ENCODE measurements at regions of chr5 and their contacts with region 1.

Region 1: DNA sequence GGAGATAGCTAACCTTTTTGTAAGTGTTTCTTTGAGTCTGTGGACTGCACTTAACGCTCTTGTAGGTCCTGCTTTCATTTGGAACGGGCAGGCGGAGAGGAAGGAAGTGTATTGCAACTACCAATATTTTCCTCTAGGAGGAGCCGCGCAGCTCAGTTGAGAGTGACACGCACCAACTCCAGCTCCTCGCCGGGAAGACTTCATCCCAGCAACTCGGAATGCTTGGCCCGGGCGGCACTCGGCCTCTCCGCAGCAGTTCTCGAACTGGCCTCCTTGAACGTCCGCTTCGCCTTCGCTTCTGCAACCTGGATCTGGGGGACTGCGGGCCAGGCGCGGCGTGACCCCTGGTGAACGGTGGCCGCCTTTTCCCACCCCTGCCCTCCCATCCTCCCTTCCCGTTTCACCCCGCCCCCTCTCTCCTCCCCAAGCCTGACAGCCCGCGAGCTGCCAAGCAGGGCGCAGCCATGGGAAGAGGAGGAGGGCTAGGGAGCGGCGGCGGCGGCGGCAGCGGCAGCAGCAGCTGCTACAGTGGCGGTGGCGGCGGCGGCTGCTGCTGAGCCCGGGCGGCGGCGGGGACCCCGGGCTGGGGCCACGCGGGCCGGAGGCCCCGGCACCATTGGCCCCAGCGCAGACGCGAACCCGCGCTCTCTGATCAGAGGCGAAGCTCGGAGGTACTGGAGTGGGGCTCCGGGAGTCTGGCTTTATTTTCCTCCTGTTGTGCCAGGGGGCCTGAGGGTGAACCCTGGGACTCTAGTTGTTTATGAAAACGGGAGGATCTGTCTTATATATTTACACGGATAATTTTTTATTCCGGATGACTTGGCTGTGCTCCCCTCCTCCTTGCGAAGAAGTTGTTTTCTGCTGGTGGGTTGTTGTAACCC is at the start of gene GHR:
- DNase-seq: peak; percentile 84 to 88 (median 87)
- ATAC-seq: peak; percentile 89 to 95 (median 94)
- H3K4me3 ChIP-seq: peak within 1 kb of the TSS; percentile 52 to 85 (median 70)
- H3K27ac ChIP-seq: peak within 1 kb of the TSS; percentile 54 to 94 (median 84)
- H3K4me1 ChIP-seq: peaks cover 0 to 31% (median 16%) of the 10 kb centered on the region in 12 donors
- H3K27me3 ChIP-seq: peaks cover 0 to 9% (median 0%) of the 10 kb centered on the region in 9 donors
- CTCF ChIP-seq: peak; percentile 62 to 90 (median 82)
- POLR2A ChIP-seq: peak in 1 of 2 donors; percentile 28
- total RNA-seq, gene GHR: 7.5 to 23.2 (median 11.7) TPM

Region 2: DNA sequence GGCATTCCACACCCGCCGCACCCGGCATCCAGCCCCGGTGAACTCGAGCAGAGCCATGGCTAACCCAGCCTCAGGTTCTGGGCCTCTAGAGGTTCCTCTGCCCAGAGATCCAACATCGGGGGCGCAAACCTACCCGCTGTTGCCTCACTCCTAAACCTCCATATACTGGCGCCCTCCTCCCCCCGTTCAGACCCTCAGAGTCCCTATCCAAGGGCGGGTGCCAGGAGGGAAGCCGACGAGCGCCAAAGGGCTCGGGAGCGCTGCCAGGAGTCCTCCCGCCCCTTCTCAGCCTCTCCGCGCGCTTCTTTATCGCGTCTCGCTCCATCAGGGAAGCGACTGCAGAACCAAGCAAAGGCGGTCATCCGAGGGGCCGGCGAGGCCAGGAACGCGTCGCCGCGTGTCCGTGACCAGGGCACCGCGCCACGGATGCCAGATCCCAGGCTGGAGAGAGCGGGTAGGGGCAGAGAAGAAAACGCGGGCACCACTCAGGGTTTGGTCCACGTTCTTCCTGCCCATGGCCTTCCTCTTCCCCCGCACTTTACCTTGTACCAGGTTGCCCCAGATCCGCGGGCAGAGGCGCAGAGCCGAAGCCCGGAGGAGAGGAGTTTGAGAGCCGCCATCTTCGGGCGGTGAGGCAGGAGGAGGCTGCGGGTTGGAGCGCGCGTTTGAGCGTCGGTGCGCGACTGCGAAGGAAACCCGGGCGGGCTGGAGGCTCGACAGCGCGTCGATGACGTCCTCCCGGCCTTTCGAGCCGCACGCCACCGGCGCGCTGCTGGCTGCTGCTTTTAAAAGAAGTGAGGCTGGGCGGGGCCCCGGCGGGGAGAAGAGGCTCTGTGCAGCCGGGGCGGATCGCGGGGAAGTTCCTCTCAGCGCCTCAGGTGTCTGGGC is 553.5 kb before region 1 on chr5 and contains the start of gene OXCT1:
- intact Hi-C with region 1: loop called in 1 of 10 experiments (anchors 10 kb)
- DNase-seq: peak; percentile 78 to 92 (median 85)
- ATAC-seq: peak; percentile 64 to 88 (median 84)
- H3K4me3 ChIP-seq: peak within 1 kb of the TSS; percentile 64 to 91 (median 78)
- H3K27ac ChIP-seq: peak within 1 kb of the TSS; percentile 84 to 96 (median 92)
- H3K4me1 ChIP-seq: peaks cover 0 to 35% (median 18%) of the 10 kb centered on the region in 12 donors
- H3K27me3 ChIP-seq: no peaks in the 10 kb centered on the region
- CTCF ChIP-seq: no peak
- POLR2A ChIP-seq: peak in 1 of 2 donors; percentile 67
- total RNA-seq, gene OXCT1: 73.4 to 363 (median 205) TPM

Region 3: DNA sequence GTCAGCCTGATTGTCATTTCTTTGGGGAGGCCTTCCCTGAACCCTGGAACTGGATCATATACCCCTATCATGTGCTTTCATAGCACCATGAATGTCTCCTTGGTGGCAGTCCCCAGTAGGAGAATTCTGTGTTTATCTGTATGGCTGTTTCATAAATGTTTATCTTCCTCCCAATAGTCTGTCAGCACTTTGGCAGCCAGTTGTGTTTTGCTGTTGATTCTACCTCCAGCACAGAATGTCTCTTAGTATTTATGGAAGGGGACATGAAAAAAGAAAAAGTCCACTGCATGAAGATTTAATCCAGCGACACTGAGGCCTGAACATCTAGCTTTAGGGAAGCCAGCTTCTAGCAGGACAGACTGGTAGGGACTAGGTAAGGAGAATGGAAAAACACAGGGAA is 38.0 kb after region 1 on chr5:
- intact Hi-C with region 1: no loop called
- DNase-seq: no peak
- ATAC-seq: peak in 1 of 4 donors; percentile 74
- H3K4me3 ChIP-seq: no peak overlapping the region
- H3K27ac ChIP-seq: no peak overlapping the region
- H3K4me1 ChIP-seq: peaks cover 0 to 16% (median 2%) of the 10 kb centered on the region in 12 donors
- H3K27me3 ChIP-seq: no peaks in the 10 kb centered on the region
- CTCF ChIP-seq: no peak
- POLR2A ChIP-seq: no peak

Region 4: DNA sequence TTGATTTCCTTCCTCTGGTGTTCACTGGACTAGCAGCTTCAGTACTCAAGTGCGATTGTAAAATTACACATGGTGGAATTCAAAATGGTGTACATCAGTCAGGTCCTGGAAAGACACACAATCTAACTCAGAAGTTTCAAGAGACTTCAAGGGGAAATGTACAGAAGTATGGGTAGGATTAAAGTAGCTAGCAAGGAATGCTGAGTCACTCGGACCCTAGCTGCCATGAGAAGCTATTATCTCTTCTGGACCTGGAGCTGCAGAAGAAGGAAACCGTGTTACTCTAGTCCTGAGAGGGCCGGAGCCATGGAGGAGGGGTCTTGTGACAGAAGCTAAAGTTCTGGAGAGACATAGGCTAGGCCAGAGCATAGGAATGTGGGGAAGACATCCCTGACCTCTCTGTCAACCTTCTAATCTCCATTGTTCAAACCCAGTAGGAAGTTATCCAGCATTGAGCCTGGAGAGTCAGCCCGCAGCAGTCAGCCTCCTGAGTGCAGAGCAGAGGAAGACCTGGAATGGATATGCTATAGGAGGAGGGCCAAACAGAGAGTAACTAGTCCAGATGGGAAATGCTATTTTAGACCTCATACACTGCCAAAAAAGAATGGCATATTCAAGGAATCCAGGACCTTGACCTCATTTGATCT is 84.0 kb after region 1 on chr5:
- intact Hi-C with region 1: loop called in 3 of 10 experiments (anchors 5 to 10 kb)
- DNase-seq: peak in 1 of 5 donors; percentile 22
- ATAC-seq: peak; percentile 43 to 76 (median 54)
- H3K4me3 ChIP-seq: no peak overlapping the region
- H3K27ac ChIP-seq: peak overlapping the region in 2 of 12 donors; percentile 27 to 37
- H3K4me1 ChIP-seq: peaks cover 0 to 60% (median 30%) of the 10 kb centered on the region in 12 donors
- H3K27me3 ChIP-seq: no peaks in the 10 kb centered on the region
- CTCF ChIP-seq: no peak
- POLR2A ChIP-seq: no peak

Region 5: GRCh38 chr5:42555797-42556196 is 132.3 kb after region 1 on chr5:
- intact Hi-C with region 1: no loop called
- DNase-seq: no peak
- ATAC-seq: no peak
- H3K4me3 ChIP-seq: no peak overlapping the region
- H3K27ac ChIP-seq: no peak overlapping the region
- H3K4me1 ChIP-seq: peaks cover 0 to 44% (median 10%) of the 10 kb centered on the region in 12 donors
- H3K27me3 ChIP-seq: no peaks in the 10 kb centered on the region
- CTCF ChIP-seq: no peak
- POLR2A ChIP-seq: no peak

Region 6: GRCh38 chr5:42566652-42567295 is 143.2 kb after region 1 on chr5:
- intact Hi-C with region 1: loop called in 2 of 10 experiments (anchors 5 kb)
- DNase-seq: peak in 1 of 5 donors; percentile 29
- ATAC-seq: peak; percentile 49 to 79 (median 66)
- H3K4me3 ChIP-seq: peak overlapping the region in 7 of 12 donors; percentile 1 to 19 (median 4)
- H3K27ac ChIP-seq: peak overlapping the region in 11 of 12 donors; percentile 36 to 67 (median 54)
- H3K4me1 ChIP-seq: peaks cover 4 to 46% (median 21%) of the 10 kb centered on the region in 12 donors
- H3K27me3 ChIP-seq: no peaks in the 10 kb centered on the region
- CTCF ChIP-seq: no peak
- POLR2A ChIP-seq: no peak

Region 7: DNA sequence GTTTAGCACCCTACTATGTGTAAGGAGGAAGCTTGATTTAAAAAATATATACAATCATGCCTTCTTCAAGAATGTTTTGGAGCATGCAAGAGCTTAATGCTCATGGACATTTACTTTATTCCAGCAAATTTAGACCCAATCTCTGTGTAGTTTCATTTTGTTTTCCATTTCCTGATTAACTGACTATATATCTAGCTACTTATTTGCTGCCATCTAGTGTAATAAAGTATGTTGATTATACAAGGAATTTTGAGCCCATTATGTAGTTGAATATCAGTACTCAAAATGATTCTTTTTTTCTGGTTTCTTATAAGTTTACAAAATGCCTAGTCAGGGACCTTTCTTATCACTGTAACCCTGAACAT is 233.1 kb after region 1 on chr5:
- intact Hi-C with region 1: loop called in 9 of 10 experiments (anchors 2 to 10 kb)
- DNase-seq: no peak
- ATAC-seq: peak in 2 of 4 donors; percentile 49 to 64
- H3K4me3 ChIP-seq: peak overlapping the region in 8 of 12 donors; percentile 1 to 47 (median 26)
- H3K27ac ChIP-seq: no peak overlapping the region
- H3K4me1 ChIP-seq: peaks cover 0 to 29% (median 14%) of the 10 kb centered on the region in 12 donors
- H3K27me3 ChIP-seq: no peaks in the 10 kb centered on the region
- CTCF ChIP-seq: peak in 10 of 12 donors; percentile 10 to 63 (median 40)
- POLR2A ChIP-seq: no peak

Region 8: DNA sequence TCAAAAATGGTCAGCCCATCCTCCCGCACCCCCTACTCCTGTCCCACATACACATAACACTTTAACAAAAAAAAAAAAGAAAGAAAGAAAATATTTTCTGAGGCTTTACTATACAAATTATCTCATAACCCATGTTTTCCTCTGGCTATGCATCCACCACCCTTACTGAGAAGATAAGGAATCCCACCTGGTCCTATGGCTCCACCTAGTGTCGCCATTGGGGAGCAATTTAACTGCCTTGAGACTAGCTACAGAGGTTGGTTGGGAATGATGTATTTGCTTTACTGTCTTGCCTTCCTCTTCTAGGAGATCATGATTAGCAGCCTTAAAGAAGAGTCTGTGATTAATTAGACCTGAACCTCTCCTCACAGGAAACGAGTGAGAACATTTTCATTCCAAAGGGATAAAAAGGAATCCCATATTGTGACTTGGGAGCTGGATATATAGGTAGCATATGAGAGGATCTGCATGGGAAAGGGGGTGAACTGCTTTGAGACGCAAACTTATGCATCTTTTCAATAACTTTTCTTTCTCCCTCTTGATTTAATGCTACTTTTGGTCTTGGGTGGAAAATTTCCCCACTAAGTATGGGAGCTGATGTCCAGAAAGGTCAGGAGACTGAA is 465.9 kb after region 1 on chr5:
- intact Hi-C with region 1: loop called in 2 of 10 experiments (anchors 10 kb)
- DNase-seq: peak in 4 of 5 donors; percentile 68 to 78 (median 74)
- ATAC-seq: peak; percentile 86 to 96 (median 91)
- H3K4me3 ChIP-seq: no peak overlapping the region
- H3K27ac ChIP-seq: no peak overlapping the region
- H3K4me1 ChIP-seq: peaks cover 0 to 7% (median 0%) of the 10 kb centered on the region in 12 donors
- H3K27me3 ChIP-seq: no peaks in the 10 kb centered on the region
- CTCF ChIP-seq: peak; percentile 83 to 99 (median 91)
- POLR2A ChIP-seq: no peak